ENCODE measurements at regions of chr1 and their contacts with region 1.

Region 1: GRCh38 chr1:235971571-235972310 is 93.1 kb downstream of the NID1 start:
- DNase-seq: peak; percentile 88
- ATAC-seq: peak; percentile 97 to 99
- H3K4me3 ChIP-seq: peak overlapping the region; percentile 25; the same call in 2 of the 3 replicates
- H3K27ac ChIP-seq: peak overlapping the region; percentile 69 to 82
- H3K4me1 ChIP-seq: peaks cover 13% of the 10 kb centered on the region
- CTCF ChIP-seq: peak; percentile 91
- EP300 ChIP-seq: no peak
- POLR2A ChIP-seq: no peak
- RAD21 ChIP-seq: peak; percentile 96 to 98

Region 2: DNA sequence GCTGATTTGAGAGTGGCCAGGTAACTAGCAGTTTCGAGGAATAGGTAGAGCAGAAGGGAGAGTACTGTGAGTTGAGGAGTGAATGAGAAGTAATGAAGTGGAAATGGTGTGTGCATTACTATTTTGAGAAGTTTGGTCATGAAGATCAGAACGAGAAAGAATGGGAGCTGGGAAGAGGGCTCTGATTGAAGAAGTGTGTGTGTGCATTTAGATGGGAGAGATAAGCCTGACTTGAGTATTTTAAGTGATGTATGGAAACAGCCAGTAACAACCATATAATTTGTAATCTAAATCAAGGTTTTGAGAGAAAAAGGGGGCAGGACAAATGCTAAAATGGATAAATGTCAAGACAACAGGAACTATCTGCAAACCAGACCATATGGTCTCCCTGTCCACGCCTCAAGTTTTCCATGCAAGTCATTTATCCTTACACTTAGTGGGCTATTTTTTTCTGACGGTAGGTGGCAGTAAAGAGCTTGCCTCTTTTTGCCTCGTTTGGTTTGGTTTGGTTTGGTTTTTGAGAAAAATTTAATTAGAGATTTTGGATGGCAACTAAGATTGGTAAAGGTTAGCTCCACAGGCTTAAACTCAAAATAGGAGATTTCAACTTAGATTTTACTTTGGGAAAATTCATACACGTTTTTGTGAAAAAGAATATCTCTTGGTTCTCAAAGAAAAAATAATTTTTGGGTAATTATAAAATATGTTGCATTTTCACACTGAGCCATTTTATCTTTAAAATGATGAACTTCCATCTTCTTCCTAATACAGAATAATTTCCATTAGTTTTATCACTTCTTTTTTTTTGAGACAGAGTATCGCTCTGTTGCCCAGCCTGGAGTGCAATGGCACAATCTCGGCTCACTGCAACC is 458.0 kb before region 1 on chr1:
- CTCF ChIA-PET with region 1: interaction called, 17 read pairs
- POLR2A ChIA-PET with region 1: no interaction called
- DNase-seq: peak; percentile 38 to 74
- ATAC-seq: peak; percentile 71 to 79; a peak in 5 of 6 replicates
- H3K4me3 ChIP-seq: no peak overlapping the region
- H3K27ac ChIP-seq: no peak overlapping the region
- H3K4me1 ChIP-seq: no peaks in the 10 kb centered on the region
- CTCF ChIP-seq: peak; percentile 96
- EP300 ChIP-seq: no peak
- POLR2A ChIP-seq: no peak
- RAD21 ChIP-seq: peak; percentile 86 to 88

Region 3: GRCh38 chr1:235821361-235821981 is 150.3 kb before region 1 on chr1:
- CTCF ChIA-PET with region 1: interaction called, 16 read pairs
- POLR2A ChIA-PET with region 1: no interaction called
- DNase-seq: no peak
- ATAC-seq: no peak
- H3K4me3 ChIP-seq: no peak overlapping the region
- H3K27ac ChIP-seq: no peak overlapping the region
- H3K4me1 ChIP-seq: peaks cover 5% of the 10 kb centered on the region; the same call in 1 of the 3 replicates
- CTCF ChIP-seq: no peak
- EP300 ChIP-seq: no peak
- POLR2A ChIP-seq: no peak
- RAD21 ChIP-seq: no peak

Region 4: DNA sequence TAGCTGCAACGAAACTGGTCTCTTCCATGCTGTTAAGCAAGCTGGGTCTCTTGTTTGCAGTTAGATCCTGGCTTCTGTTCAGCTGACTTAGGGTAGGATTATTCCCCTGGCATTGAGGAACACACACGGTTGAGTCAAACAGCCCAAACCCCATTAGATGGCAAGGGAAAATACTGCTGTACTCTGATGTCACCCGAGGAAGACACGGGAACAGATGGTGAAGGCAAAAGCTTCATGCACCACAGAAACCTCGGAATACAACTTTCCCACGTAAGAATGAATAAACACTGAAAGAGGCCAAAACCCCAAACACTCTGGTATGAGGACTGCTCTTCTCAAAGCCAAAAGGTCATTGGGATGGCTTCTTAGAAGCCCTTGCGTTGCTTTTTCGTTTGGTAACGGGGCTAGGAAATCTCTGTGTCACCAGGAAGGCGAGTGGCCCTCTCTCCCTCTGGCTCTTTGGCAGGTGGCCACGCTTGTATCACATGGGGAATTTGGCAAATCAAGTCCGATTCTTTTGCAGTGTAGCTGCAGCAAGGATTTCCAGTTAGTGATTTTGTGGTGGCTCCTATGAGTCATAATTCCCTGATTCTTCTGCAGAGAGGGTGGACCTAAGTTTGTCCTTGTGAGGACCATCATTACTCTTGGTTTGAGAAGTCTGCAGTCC is 88.3 kb before region 1 on chr1:
- CTCF ChIA-PET with region 1: interaction called, 10 read pairs
- POLR2A ChIA-PET with region 1: no interaction called
- DNase-seq: peak in 1 of 2 experiments; percentile 17
- ATAC-seq: peak in 1 of 2 experiments; percentile 50; a peak in 3 of 6 replicates
- H3K4me3 ChIP-seq: no peak overlapping the region
- H3K27ac ChIP-seq: peak overlapping the region in 1 of 2 experiments; percentile 32; a peak in 3 of 6 replicates
- H3K4me1 ChIP-seq: peaks cover 7% of the 10 kb centered on the region; the same call in 2 of the 3 replicates
- CTCF ChIP-seq: no peak
- EP300 ChIP-seq: no peak
- POLR2A ChIP-seq: no peak
- RAD21 ChIP-seq: no peak

Region 5: GRCh38 chr1:235923466-235924021 is 48.2 kb before region 1 on chr1:
- CTCF ChIA-PET with region 1: interaction called, 35 read pairs
- POLR2A ChIA-PET with region 1: interaction called, 3 read pairs
- DNase-seq: no peak
- ATAC-seq: no peak
- H3K4me3 ChIP-seq: no peak overlapping the region
- H3K27ac ChIP-seq: peak overlapping the region in 1 of 2 experiments; percentile 27; a peak in 1 of 6 replicates
- H3K4me1 ChIP-seq: peaks cover 36% of the 10 kb centered on the region
- CTCF ChIP-seq: no peak
- EP300 ChIP-seq: no peak
- POLR2A ChIP-seq: no peak
- RAD21 ChIP-seq: no peak

Region 6: GRCh38 chr1:235954306-235955283 is 17.1 kb before region 1 on chr1:
- CTCF ChIA-PET with region 1: interaction called, 100 read pairs
- POLR2A ChIA-PET with region 1: no interaction called
- DNase-seq: no peak
- ATAC-seq: no peak
- H3K4me3 ChIP-seq: no peak overlapping the region
- H3K27ac ChIP-seq: no peak overlapping the region
- H3K4me1 ChIP-seq: 0 out of 3 replicates have a peak, but pooled peaks cover 8% of the 10 kb centered on the region
- CTCF ChIP-seq: no peak
- EP300 ChIP-seq: no peak
- POLR2A ChIP-seq: no peak
- RAD21 ChIP-seq: no peak

Region 7: DNA sequence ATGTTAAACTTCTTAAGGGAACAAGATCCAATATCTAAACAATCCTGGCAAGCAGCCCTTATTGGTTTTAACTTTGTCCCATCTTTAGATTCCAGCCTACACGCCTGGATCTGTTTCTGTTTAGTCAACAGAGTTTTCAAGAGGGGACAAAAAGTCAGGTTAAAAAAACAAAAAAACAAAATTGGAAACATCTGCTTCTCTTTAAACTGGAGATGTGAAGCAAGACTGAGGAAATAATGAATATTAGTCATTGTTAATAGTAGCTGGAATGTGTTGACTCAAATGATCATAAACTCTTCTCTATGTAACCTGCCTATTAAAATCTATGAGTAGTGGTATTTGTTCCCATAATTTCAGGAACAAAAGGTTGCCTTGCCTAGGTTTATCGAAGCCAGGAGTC is 38.1 kb after region 1 on chr1:
- CTCF ChIA-PET with region 1: interaction called, 10 read pairs
- POLR2A ChIA-PET with region 1: no interaction called
- DNase-seq: no peak
- ATAC-seq: no peak
- H3K4me3 ChIP-seq: no peak overlapping the region
- H3K27ac ChIP-seq: no peak overlapping the region
- H3K4me1 ChIP-seq: peaks cover 12% of the 10 kb centered on the region
- CTCF ChIP-seq: no peak
- EP300 ChIP-seq: no peak
- POLR2A ChIP-seq: no peak
- RAD21 ChIP-seq: no peak